ENCODE measurements at regions of chr2 and their contacts with region 1.

Region 1: GRCh38 chr2:69565431-69565839 is 78.1 kb downstream of the AAK1 start:
- DNase-seq: peak in 41 of 42 donors; percentile 44 to 91 (median 72)

Region 2: DNA sequence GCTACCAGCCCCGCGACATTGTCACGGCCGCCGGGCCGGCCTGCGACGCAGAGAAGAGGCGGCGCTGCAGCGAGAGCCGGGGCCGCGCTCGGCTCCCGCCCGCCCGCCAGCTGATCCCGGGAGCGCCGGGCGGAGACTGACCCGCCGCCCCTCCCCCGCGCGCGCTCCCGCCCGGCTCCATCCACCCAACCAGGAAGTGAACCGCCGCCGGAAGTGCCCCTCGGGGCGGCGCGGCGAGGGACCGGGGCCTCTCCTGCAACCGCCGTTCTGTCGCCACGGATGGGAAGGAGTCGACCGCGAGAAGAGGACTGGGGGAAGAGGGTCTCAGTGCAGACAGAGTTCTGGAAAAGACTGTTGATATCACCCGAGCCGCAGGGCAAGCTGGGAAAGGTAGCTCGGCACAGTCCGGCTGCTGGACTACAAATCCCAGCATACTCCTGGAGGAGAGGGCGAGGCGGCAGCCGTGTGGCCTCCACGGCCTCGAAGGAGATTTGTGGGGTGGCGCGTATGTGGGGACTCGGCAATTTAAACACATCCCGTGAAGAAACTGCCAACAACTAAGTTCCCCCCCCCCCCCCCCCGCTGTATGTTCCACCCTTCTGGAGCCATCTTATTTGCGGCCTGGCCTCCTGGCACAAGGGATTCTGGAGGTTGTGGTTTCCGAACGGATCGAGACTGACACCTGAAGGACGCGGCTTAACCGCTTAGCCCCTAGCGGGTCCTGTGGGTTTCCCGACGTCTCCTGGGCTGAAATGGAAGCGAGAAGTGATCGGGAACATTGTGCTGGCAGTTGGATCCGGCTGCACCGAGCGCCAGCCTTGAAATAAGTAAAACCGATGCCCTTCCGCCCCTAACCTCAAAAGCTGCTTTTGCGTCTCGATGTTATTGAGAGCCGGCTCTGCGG is 78.4 kb after region 1 on chr2 and contains the start of gene AAK1:
- intact Hi-C with region 1: loop called (anchors 10 kb)
- DNase-seq: peak; percentile 64 to 96 (median 91)

Region 3: GRCh38 chr2:69717861-69718273 is 152.4 kb after region 1 on chr2:
- intact Hi-C with region 1: loop called (anchors 10 kb)
- DNase-seq: no peak

Measured in head of caudate nucleus (tissue), 42 donors.